Activated CD4-positive, alpha-beta T cell treated with anti-CD3 and anti-CD28 coated beads, Interleukin-2, amount 10 ng/mL, durations not matched to agents 24 days and 14 days (primary cell): ENCODE measurements at regions of chr4 and their contacts with region 1.

Region 1: DNA sequence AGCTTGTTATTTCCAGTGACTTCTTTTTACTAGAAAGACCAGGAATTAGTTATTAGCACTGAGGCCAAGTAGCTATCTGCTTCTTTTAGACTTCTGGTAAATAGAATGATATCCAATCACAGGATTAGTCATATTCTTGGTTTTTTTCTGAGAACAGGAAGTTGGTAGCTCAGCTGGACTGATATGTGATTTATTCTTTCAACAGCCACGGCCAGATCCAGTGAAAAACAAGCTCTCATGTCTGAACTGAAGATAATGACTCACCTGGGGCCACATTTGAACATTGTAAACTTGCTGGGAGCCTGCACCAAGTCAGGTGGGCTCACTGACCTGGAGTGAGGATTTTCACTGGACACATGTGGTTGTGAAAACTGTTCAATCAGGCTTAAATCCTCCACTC is 48.6 kb downstream of the PDGFRA start:
- DNase-seq: peak; percentile 58
- H3K4me3 Mint-ChIP-seq: peak overlapping the region; percentile 14
- H3K27ac Mint-ChIP-seq: peak overlapping the region; percentile 63
- H3K4me1 Mint-ChIP-seq: peaks cover 20% of the 10 kb centered on the region
- H3K27me3 Mint-ChIP-seq: no peaks in the 10 kb centered on the region

Region 2: GRCh38 chr4:53962516-53963225 is 315.0 kb before region 1 on chr4:
- intact Hi-C with region 1: no loop called
- DNase-seq: no peak
- H3K4me3 Mint-ChIP-seq: no peak overlapping the region
- H3K27ac Mint-ChIP-seq: no peak overlapping the region
- H3K4me1 Mint-ChIP-seq: no peaks in the 10 kb centered on the region
- H3K27me3 Mint-ChIP-seq: no peaks in the 10 kb centered on the region

Region 3: DNA sequence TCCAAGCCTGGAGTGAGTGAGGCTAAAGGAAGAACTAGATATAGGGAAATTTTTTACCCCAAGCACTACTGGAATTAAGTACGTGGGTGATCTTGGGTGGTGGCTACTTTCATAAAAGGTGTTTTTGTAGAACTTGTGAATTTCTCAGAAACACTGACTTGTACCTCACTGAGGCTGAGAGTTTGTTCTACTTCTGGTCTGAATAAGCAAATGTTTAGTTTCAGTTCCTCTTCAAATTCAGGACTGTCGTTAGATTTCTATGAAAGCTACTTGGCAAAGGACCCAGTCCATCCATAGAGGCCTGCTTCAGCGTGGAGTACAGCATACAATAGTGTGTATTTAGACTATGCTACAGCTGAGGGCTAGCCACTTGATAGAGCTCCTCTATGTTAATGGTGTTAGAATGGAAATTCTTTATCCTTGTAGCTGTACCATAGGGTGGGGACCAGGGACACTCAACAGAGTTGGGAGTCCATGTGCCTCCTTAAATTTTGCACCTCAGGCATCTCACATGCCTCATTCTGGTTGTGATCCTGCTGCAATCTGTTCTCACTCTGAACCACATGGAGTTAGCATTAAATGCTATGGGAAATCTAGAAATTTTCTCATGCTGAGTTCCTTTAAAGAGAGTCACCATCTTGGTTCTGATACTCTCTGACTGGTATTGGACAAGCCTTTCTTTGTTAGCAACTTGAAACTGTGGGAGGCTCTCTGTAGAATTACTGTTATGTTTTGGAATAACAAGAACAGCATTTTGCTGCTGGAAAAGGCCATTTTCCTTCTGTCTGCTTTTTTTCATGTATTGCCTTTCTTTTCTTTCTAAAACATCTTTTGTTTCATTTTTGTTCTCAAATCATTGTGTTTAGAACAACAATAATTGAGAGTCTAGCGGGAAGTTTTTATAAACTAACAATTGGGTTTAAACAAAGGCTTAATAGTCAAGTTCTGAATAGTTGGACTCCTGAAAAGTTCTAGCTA is 38.2 kb after region 1 on chr4:
- intact Hi-C with region 1: loop called (anchors 1 kb)
- DNase-seq: peak; percentile 68
- H3K4me3 Mint-ChIP-seq: peak overlapping the region; percentile 38
- H3K27ac Mint-ChIP-seq: peak overlapping the region; percentile 75
- H3K4me1 Mint-ChIP-seq: peaks cover 30% of the 10 kb centered on the region
- H3K27me3 Mint-ChIP-seq: peaks cover 3% of the 10 kb centered on the region

Region 4: DNA sequence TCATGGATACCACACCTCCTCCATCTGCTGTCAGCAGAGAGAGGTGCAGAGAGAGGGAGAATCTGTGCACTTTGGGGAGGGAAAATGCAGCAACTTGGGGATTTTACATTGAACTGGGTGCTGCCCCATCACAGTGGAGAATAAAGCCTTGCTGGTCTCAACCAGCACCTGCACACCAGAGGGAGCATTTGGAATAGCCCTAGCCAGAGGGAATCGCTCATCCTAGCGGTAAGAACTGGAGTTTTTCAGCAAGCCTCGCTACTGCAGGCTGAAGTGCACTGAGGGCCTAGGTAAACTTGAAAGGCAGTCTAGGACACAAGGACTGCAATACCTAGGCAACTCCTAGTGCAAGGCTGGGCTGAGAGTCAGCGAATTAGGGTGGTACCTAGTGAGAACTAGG is 699.0 kb after region 1 on chr4:
- intact Hi-C with region 1: no loop called
- DNase-seq: no peak
- H3K4me3 Mint-ChIP-seq: no peak overlapping the region
- H3K27ac Mint-ChIP-seq: no peak overlapping the region
- H3K4me1 Mint-ChIP-seq: no peaks in the 10 kb centered on the region
- H3K27me3 Mint-ChIP-seq: peaks cover 5% of the 10 kb centered on the region